AG04449 (cell line): ENCODE measurements at regions of chr5 and their contacts with region 1.

Region 1: GRCh38 chr5:73591102-73591695 is 25.7 kb downstream of the UTP15 start:
- DNase-seq: peak; percentile 81
- H3K4me3 ChIP-seq: no peak overlapping the region
- CTCF ChIP-seq: peak; percentile 28

Region 2: GRCh38 chr5:73565139-73565968 is 25.8 kb before region 1 on chr5 and contains the starts of genes ANKRA2 and UTP15:
- CTCF ChIA-PET with region 1: interaction called, 13 read pairs
- POLR2A ChIA-PET with region 1: no interaction called
- DNase-seq: peak; percentile 84
- H3K4me3 ChIP-seq: peak within 1 kb of the TSS; percentile 97
- CTCF ChIP-seq: no peak

Region 3: GRCh38 chr5:73693481-73694061 is 102.4 kb after region 1 on chr5:
- CTCF ChIA-PET with region 1: interaction called, 91 read pairs
- POLR2A ChIA-PET with region 1: interaction called, 4 read pairs
- DNase-seq: no peak
- H3K4me3 ChIP-seq: no peak overlapping the region
- CTCF ChIP-seq: peak; percentile 52

Region 4: GRCh38 chr5:73801686-73802085 is 210.5 kb after region 1 on chr5:
- CTCF ChIA-PET with region 1: interaction called, 517 read pairs
- POLR2A ChIA-PET with region 1: interaction called, 4 read pairs
- DNase-seq: no peak
- H3K4me3 ChIP-seq: no peak overlapping the region
- CTCF ChIP-seq: no peak

Region 5: GRCh38 chr5:73892806-73893205 is 301.6 kb after region 1 on chr5:
- CTCF ChIA-PET with region 1: interaction called, 11 read pairs
- POLR2A ChIA-PET with region 1: no interaction called
- DNase-seq: peak; percentile 94
- H3K4me3 ChIP-seq: no peak overlapping the region
- CTCF ChIP-seq: no peak

Region 6: DNA sequence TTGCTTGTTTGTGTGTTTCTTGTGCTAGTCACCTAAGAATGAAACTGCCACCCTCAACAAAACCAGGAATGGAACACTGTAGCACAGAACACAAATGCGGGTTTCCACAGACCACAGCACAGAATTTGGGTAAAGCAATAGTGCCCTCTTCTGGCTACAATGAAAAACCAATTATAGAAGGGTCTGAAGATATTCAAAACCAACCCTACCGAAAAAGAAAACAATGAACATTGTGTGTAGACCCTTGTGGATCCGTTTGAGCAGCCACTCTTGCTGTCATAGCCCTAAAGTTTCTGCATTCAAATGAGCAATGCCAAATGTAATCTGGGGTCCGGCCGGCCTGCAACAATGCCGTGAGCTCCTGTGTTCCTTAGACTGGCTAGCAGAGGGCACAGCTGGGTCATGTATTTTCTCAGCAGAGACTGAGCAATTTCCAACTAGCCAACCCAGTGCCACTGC is 1057.7 kb after region 1 on chr5:
- CTCF ChIA-PET with region 1: interaction called, 20 read pairs
- POLR2A ChIA-PET with region 1: no interaction called
- DNase-seq: no peak
- H3K4me3 ChIP-seq: no peak overlapping the region
- CTCF ChIP-seq: peak; percentile 53